Right cardiac atrium (tissue), 5 donors: ENCODE measurements at regions of chr20 and their contacts with region 1.

Region 1: DNA sequence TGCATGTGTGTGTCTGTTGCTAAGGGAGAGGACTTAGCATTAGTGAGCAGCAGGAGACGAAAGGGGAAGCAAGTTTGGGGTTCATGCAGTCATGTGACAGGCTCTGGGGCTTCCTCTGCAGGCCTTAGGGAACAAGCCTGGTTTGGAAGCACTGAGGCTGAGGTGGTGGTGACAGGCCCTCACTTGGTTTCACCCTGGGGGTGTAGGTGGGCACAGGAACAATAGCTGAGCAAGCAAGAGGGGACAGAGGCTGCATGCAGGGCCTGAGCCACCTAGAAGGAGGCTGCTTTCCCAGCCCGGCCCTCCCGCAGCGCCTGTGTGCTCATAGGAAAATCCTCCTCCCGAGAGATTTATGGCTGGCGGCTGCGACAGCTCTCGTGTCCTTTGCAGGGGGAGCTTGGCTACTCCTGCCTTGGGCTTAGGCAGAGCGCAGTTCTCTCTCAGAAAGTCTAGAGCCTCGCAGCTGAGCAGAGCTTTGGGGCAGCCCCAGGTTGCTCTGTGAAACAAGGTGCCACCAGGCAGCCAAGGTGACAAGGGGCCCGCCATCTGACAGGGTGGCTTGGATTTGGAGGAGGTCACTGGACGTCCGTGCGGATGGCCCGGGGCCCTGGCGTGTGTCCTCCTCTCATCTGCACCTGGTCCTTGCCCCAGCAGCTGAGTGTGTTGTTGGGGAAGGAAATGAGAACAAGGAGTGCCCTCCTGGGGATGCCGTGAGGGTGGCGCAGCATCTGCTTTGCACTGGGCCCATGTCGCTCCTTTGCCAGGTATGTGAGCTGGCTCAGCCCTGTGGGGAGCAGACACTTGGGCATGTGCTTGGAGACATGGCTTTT is 41.6 kb downstream of the EDN3 start:
- DNase-seq: no peak
- ATAC-seq: no peak
- H3K4me3 ChIP-seq: no peak overlapping the region
- H3K27ac ChIP-seq: no peak overlapping the region
- H3K4me1 ChIP-seq: no peaks in the 10 kb centered on the region
- H3K27me3 ChIP-seq: no peaks in the 10 kb centered on the region

Region 2: GRCh38 chr20:59403261-59403961 is 61.4 kb after region 1 on chr20:
- intact Hi-C with region 1: loop called in 1 of 4 experiments (anchors 10 kb)
- DNase-seq: peak; percentile 38 to 74 (median 73)
- ATAC-seq: peak; percentile 65 to 83
- H3K4me3 ChIP-seq: no peak overlapping the region
- H3K27ac ChIP-seq: no peak overlapping the region
- H3K4me1 ChIP-seq: no peaks in the 10 kb centered on the region
- H3K27me3 ChIP-seq: no peaks in the 10 kb centered on the region

Region 3: DNA sequence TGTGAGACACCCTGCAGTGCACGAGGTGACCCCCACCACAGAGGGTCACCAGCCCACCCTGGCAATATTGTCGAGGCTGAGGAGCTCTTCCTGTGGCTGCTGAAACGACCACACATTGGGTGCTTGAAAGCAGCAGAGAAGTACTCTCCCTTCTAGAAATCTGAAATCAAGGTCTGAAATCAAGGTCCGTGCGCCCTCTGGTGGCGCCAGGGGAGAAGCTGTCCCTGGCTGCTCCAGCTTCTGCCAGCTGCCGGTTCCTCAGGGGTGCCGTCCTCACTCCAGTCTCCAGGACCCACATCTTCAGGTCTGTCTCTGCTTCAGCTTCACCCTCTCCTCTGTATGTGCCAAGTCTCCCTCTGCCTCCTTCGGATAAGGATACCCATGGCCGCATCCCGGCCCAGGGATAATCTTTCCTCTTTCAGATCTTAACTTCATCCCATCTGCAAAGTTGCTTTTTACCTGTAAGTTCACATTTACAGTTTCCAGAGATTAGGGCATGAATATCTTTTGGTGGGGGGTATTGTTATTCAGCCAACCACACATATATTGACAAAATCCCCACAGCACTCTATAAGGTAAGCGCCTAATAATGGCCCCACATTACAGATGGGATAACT is 154.0 kb after region 1 on chr20:
- intact Hi-C with region 1: no loop called
- DNase-seq: peak; percentile 68 to 86 (median 83)
- ATAC-seq: peak; percentile 62 to 63
- H3K4me3 ChIP-seq: no peak overlapping the region
- H3K27ac ChIP-seq: no peak overlapping the region
- H3K4me1 ChIP-seq: no peaks in the 10 kb centered on the region
- H3K27me3 ChIP-seq: no peaks in the 10 kb centered on the region